ENCODE measurements at regions of chr13 and their contacts with region 1.

Region 1: DNA sequence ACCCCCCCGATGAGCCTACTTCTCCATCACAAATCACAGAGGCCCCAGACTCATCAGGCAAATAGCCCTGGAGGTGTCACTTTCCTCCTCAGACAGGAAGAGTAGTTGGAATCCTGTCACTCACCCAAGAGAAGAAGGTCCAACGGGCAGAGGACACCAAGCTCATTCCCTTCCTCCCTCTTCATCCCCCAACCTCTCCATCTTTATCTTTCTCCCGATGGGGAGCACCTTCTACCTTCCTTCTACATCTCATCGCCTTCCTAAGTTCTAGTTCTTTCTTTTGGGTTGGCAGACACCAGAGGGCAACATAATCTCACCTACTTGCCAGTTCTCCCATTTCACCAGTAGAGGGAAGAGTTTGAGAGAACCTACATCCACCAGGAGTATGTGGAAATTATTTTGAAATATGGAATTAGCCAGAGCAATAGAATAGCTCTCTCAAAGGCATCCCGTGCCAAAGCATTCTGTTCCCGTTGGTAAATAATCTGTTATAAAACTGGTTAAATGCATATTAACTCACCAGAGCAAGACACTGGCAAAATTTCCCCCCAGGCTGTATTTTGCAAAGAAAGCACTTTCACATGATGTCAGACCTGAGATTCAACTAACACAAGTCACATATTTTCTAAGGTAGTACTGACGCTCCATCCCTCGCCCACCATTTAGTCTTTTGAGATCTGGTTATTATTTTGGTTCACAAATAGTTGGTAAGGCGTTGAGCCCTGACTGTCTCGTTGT is 55.0 kb downstream of the ZIC5 start:
- DNase-seq: no peak
- H3K4me3 ChIP-seq: no peak overlapping the region
- H3K27ac ChIP-seq: no peak overlapping the region
- H3K4me1 ChIP-seq: no peaks in the 10 kb centered on the region
- H3K27me3 ChIP-seq: no peaks in the 10 kb centered on the region
- CTCF ChIP-seq: peak; percentile 57 to 74 (median 61)

Region 2: GRCh38 chr13:100235311-100235901 is 318.9 kb after region 1 on chr13:
- intact Hi-C with region 1: loop called (anchors 2 kb)
- DNase-seq: no peak
- H3K4me3 ChIP-seq: no peak overlapping the region
- H3K27ac ChIP-seq: no peak overlapping the region
- H3K4me1 ChIP-seq: no peaks in the 10 kb centered on the region
- H3K27me3 ChIP-seq: no peaks in the 10 kb centered on the region
- CTCF ChIP-seq: peak in 2 of 3 experiments; percentile 42 to 55

Region 3: DNA sequence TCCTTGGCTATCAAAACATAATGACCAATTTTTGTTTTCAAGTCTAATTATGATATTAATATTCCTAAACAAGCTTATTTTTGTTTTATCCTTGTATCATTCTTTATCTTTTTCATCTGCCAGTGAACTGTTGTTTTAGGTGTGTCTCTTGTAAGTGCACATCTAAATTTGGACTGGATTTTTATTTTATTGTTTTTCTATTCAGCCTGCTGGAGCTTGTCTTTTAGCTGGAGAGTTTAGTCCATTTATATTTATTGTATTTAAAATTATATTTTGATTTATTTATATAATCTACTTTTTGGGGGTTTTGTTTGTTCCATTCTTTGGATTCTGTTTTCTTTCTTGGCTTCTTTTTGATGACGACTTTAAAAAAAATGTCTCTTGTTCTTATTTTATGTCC is 331.4 kb after region 1 on chr13:
- intact Hi-C with region 1: no loop called
- DNase-seq: no peak
- H3K4me3 ChIP-seq: no peak overlapping the region
- H3K27ac ChIP-seq: no peak overlapping the region
- H3K4me1 ChIP-seq: no peaks in the 10 kb centered on the region
- H3K27me3 ChIP-seq: no peaks in the 10 kb centered on the region
- CTCF ChIP-seq: no peak

Region 4: GRCh38 chr13:100514788-100515409 is 598.4 kb after region 1 on chr13:
- intact Hi-C with region 1: loop called (anchors 5 kb)
- DNase-seq: peak in 1 of 2 donors; percentile 81
- H3K4me3 ChIP-seq: no peak overlapping the region
- H3K27ac ChIP-seq: no peak overlapping the region
- H3K4me1 ChIP-seq: no peaks in the 10 kb centered on the region
- H3K27me3 ChIP-seq: no peaks in the 10 kb centered on the region
- CTCF ChIP-seq: peak; percentile 59 to 90 (median 88)